ENCODE measurements at regions of chr1 and their contacts with region 1.

Region 1: DNA sequence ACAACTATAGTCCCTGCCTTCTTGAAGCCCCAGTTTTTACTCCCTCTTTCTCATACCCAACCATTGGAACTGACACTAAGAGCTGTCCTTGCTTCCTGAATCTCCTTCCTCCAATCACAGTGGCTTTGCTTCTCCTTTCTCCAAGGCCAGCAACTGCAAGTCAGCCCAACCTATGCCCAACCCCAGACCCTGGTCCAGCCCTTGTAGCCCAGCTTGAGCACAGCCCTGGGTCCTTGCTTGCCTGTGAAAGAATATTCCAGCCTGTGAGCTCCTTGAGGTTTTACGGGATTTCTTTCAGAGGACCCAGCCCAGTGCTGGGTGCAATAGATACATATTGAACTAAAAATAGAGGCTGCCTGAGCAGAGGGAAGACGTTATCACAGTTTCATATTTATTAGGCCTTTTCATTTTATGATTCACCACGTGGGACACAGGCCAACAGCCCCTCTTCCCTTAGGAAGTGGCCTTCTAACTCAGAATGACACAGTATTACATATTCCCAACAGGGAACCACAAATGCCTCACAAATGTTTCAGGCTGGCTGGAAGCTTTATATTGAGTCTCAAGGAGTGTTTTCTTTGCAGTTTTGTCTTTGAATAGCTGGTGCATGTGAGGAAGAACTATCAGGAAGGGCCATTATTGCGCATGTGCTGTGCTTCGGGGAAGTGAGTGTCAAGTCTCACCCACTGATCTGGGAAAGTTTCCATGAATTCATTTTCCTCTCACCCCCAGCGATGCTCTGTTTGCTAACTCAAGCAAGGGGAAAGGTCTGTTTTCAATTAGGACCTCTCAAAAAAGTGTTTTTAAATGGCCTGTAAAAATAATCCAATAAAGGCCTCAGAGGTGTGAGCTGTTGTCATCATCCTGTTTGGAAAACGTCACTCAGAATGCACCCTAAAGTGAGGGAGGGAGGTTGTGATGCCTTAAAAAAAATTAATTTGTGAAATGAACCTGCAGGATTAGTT is 92.3 kb upstream of the NFIA start:
- DNase-seq: peak in 1 of 6 donors; percentile 15
- ATAC-seq: peak in 3 of 4 donors; percentile 47 to 70 (median 54)
- H3K4me3 ChIP-seq: no peak overlapping the region
- H3K27ac ChIP-seq: peak overlapping the region in 2 of 4 donors; percentile 29 to 31
- H3K4me1 ChIP-seq: peaks cover 0 to 5% (median 0%) of the 10 kb centered on the region in 3 donors
- H3K27me3 ChIP-seq: no peaks in the 10 kb centered on the region
- CTCF ChIP-seq: no peak

Region 2: DNA sequence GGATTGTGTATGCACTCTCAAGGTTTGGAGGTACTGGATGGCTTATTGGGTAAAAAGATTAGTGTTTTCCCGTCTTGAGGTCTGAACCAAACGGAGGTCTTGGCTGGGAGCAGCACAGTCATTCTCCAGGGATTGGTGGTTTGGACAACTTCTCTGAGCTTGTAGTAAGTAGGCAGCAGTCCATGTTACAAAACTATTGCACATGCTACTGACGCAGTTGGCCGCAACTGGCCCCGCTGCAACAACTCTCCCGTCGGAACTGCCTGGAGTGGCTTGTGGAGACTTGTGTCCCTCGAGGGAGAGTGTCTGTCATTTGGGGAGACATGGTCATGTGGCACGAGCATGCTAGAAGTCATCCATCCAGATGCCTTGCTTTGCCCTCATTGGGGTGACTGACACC is 458.9 kb after region 1 on chr1:
- intact Hi-C with region 1: loop called in 1 of 3 experiments (anchors 10 kb)
- DNase-seq: peak in 2 of 6 donors; percentile 21 to 27
- ATAC-seq: peak in 2 of 4 donors; percentile 15 to 33
- H3K4me3 ChIP-seq: no peak overlapping the region
- H3K27ac ChIP-seq: no peak overlapping the region
- H3K4me1 ChIP-seq: peaks cover 5 to 22% (median 19%) of the 10 kb centered on the region in 3 donors
- H3K27me3 ChIP-seq: no peaks in the 10 kb centered on the region
- CTCF ChIP-seq: no peak

Measured in pancreas (tissue), 10 donors.